HEK293T (cell line): ENCODE measurements at regions of chr15 and their contacts with region 1.

Region 1: GRCh38 chr15:60916679-60917460 is 312.2 kb downstream of the RORA start:
- DNase-seq: peak; percentile 66

Region 2: DNA sequence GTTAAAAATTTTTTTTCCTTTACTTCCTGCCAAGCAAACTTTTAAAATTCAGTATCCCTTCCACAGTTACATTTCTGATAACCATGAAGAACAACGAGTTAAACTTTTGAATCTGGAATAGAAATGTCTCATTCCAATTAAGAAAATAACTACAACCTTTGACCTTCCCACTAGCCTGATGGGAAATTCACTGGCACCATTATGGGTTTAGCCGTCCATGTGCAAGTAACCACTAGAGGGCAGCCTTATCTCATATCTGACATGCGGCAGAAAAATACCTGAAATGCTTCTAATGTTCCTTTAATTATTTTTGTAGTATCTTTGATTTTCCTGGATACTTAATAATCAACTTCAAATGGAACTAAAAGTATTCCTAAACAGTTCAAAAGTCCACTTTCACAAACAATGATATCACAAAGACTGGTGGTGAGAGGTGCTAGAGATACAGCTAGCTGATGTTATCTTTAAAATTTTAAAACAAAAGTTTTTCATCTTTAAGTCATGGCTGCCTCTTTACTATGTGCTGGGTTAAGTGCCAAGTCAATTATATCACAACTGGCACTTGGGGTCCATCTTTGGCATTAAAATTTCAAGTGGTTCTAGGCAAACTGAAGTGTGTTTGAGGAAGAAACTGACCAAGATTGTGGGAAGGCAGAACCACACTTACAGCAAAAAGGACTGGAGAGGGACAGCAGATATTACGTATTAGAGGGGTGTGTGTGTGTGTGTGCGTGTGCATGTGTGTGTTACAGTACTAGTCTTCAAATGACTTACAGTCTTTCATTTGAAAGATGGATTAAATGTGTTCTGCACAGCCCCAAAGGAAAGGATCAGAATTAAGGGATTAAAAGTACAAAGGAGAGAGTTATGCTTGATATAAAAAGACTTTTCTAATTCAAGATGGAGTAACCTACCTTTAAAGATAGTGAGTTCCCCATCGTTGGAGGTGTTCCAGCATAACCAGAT is 330.8 kb before region 1 on chr15:
- CTCF ChIA-PET with region 1: interaction called, 11 read pairs
- POLR2A ChIA-PET with region 1: no interaction called
- DNase-seq: peak; percentile 39